ENCODE measurements at regions of chr7 and their contacts with region 1.

Region 1: DNA sequence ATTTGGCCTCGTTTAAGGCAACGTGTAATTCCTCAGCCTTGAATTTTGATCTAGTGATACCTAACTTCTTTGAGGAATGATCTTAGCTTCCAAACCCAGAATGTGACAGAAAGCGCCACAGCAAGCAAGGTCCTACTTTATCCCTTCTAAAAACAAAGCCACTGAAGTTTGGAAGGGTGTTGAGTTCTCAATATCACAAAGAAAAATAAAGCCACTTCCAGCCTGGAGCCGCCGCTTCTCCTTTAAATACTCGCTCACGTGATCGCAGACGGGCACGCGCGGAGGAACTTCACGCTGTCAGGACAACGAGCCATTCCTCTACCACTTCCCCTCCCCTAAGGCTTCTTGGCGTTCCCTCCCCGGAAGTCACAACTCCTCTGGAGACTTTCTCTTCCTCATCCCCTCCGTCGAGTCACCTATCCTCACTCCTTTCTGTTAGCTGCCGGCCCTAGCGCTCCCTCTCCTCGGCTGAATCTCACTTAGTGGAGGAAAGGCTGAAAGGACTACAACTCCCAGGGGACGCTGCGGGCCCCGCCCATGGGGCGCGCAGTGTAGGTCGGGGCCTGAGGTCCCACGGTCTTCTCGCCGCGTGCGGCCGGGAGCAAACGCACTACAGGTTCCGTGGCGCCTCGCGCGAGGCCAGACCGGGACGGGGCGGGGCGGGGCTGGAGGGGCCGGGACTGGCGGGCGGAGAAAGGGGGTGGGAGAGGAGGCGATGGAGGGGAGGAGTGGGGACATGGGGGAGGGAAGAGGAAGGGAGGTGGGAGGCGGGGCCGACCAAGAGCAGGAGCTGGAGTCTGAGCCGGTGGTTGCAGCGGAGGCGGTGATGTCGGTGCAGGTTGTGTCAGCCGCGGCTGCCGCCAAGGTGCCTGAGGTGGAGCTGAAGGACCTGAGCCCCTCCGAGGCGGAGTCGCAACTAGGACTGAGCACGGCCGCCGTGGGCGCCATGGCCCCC is at the start of gene AHCYL2:
- DNase-seq: peak; percentile 88
- H3K4me3 ChIP-seq: peak within 1 kb of the TSS; percentile 69 to 99 (median 90)
- H3K27ac ChIP-seq: peak within 1 kb of the TSS; percentile 90 to 98 (median 94)
- H3K4me1 ChIP-seq: peaks cover 0 to 51% (median 13%) of the 10 kb centered on the region in 3 donors
- H3K27me3 ChIP-seq: no peaks in the 10 kb centered on the region
- CTCF ChIP-seq: no peak
- POLR2A ChIP-seq: peak in 1 of 4 donors; percentile 68
- total RNA-seq, gene AHCYL2: 10.8 to 14.0 (median 13.7) TPM

Region 2: GRCh38 chr7:129262324-129262723 is 37.8 kb after region 1 on chr7:
- intact Hi-C with region 1: loop called (anchors 5 kb)
- DNase-seq: no peak
- H3K4me3 ChIP-seq: no peak overlapping the region
- H3K27ac ChIP-seq: no peak overlapping the region
- H3K4me1 ChIP-seq: peaks cover 3 to 42% (median 6%) of the 10 kb centered on the region in 3 donors
- H3K27me3 ChIP-seq: no peaks in the 10 kb centered on the region
- CTCF ChIP-seq: no peak
- POLR2A ChIP-seq: no peak

Region 3: GRCh38 chr7:129298268-129298893 is 73.9 kb after region 1 on chr7:
- intact Hi-C with region 1: loop called (anchors 10 kb)
- DNase-seq: no peak
- H3K4me3 ChIP-seq: no peak overlapping the region
- H3K27ac ChIP-seq: no peak overlapping the region
- H3K4me1 ChIP-seq: peaks cover 0 to 25% (median 7%) of the 10 kb centered on the region in 3 donors
- H3K27me3 ChIP-seq: no peaks in the 10 kb centered on the region
- CTCF ChIP-seq: peak in 5 of 6 experiments; percentile 54 to 81 (median 71)
- POLR2A ChIP-seq: no peak

Measured in esophagus squamous epithelium (tissue), 5 donors.